Right lobe of liver (tissue), 6 donors: ENCODE measurements at regions of chr2 and their contacts with region 1.

Region 1: GRCh38 chr2:38128653-38129052 is 52.7 kb upstream of the CYP1B1 start:
- DNase-seq: peak in 2 of 3 donors; percentile 37 to 60
- ATAC-seq: peak; percentile 83 to 95 (median 91)
- H3K4me3 ChIP-seq: no peak overlapping the region
- H3K27ac ChIP-seq: no peak overlapping the region
- H3K4me1 ChIP-seq: peaks cover 0 to 3% (median 0%) of the 10 kb centered on the region in 4 donors
- H3K27me3 ChIP-seq: no peaks in the 10 kb centered on the region
- CTCF ChIP-seq: no peak
- POLR2A ChIP-seq: no peak

Region 2: GRCh38 chr2:37907501-37908225 is 221.0 kb before region 1 on chr2:
- intact Hi-C with region 1: no loop called
- DNase-seq: no peak
- ATAC-seq: no peak
- H3K4me3 ChIP-seq: no peak overlapping the region
- H3K27ac ChIP-seq: no peak overlapping the region
- H3K4me1 ChIP-seq: peaks cover 0 to 8% (median 3%) of the 10 kb centered on the region in 4 donors
- H3K27me3 ChIP-seq: no peaks in the 10 kb centered on the region
- CTCF ChIP-seq: no peak
- POLR2A ChIP-seq: no peak

Region 3: GRCh38 chr2:37973615-37974353 is 154.9 kb before region 1 on chr2:
- intact Hi-C with region 1: loop called in 1 of 2 experiments (anchors 10 kb)
- DNase-seq: no peak
- ATAC-seq: no peak
- H3K4me3 ChIP-seq: no peak overlapping the region
- H3K27ac ChIP-seq: no peak overlapping the region
- H3K4me1 ChIP-seq: no peaks in the 10 kb centered on the region
- H3K27me3 ChIP-seq: no peaks in the 10 kb centered on the region
- CTCF ChIP-seq: no peak
- POLR2A ChIP-seq: no peak

Region 4: GRCh38 chr2:38690499-38691294 is 562.0 kb after region 1 on chr2:
- intact Hi-C with region 1: no loop called
- DNase-seq: no peak
- ATAC-seq: peak in 2 of 4 donors; percentile 54 to 93
- H3K4me3 ChIP-seq: no peak overlapping the region
- H3K27ac ChIP-seq: no peak overlapping the region
- H3K4me1 ChIP-seq: peaks cover 0 to 15% (median 2%) of the 10 kb centered on the region in 4 donors
- H3K27me3 ChIP-seq: no peaks in the 10 kb centered on the region
- CTCF ChIP-seq: no peak
- POLR2A ChIP-seq: no peak